ENCODE measurements at regions of chr20 and their contacts with region 1.

Region 1: GRCh38 chr20:33097001-33097400 is 17.6 kb downstream of the BPIFB4 start:
- DNase-seq: no peak
- H3K4me3 ChIP-seq: no peak overlapping the region
- H3K27ac ChIP-seq: no peak overlapping the region
- H3K4me1 ChIP-seq: no peaks in the 10 kb centered on the region
- H3K27me3 ChIP-seq: peaks cover 9% of the 10 kb centered on the region
- CTCF ChIP-seq: no peak

Region 2: DNA sequence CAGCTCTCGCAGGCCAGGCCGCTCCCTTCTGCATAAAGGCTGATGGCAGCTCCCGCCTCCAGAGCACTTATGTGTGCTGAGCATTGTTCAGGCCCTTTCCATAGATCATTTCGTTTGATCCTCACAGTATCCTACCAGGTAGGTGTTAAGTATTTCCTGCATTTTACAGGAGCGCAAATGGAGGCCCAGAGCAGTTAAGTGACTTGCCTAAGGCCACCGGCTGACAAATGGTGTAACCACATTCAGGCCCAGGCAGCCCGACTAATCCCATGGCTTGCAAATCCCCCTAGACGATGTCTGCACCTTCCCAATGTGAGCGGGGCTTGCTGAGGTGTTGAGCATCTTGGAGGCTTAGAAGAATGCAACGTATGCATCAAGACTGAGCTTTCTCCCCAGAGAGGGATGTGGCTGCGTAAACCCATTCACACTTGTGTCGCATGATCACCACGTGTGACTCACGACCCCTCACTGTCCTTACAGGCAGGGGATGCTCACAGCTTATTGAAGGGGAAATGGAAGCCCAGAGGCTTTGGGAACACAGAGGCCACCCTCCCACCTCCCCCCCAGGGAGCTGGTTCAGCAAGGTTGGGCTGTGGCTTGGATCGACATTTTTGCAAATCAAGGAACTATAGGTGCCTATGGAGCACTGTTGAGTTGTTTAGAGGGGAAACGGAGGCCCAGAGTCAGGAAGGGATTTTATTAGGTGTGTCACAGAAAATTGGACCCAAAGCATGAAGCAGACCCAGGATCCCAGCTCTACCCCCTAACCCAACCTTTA is 82.5 kb before region 1 on chr20:
- CTCF ChIA-PET with region 1: no interaction called
- POLR2A ChIA-PET with region 1: no interaction called
- intact Hi-C with region 1: no loop called
- DNase-seq: no peak
- H3K4me3 ChIP-seq: no peak overlapping the region
- H3K27ac ChIP-seq: no peak overlapping the region
- H3K4me1 ChIP-seq: no peaks in the 10 kb centered on the region
- H3K27me3 ChIP-seq: peaks cover 61% of the 10 kb centered on the region
- CTCF ChIP-seq: no peak

Region 3: DNA sequence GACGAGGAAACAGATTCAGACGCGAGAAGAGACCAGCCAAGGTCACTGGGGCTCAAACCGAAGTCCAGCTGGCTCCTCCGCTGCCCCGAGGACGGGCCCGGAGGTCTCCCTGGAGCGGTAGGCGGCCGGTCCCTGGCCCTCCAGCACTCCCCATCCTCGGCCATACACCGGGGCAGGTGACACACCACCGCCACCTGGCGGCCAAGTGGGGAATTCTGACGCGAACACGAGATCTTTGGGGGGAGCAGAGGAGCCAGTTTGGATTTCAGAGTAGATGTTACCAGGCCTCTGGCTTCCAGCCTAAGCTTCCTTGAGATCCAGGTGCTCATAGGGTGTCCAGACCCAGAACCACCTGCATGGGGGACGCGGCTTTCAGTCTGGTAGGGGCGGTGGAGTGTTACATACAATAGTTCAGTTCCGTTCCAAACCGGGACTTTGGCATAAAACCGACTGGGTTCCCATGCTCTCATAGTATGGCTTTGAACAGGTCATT is 202.2 kb after region 1 on chr20:
- CTCF ChIA-PET with region 1: no interaction called
- POLR2A ChIA-PET with region 1: no interaction called
- intact Hi-C with region 1: loop called (anchors 10 kb)
- DNase-seq: peak; percentile 74
- H3K4me3 ChIP-seq: no peak overlapping the region
- H3K27ac ChIP-seq: no peak overlapping the region
- H3K4me1 ChIP-seq: no peaks in the 10 kb centered on the region
- H3K27me3 ChIP-seq: peaks cover 40% of the 10 kb centered on the region
- CTCF ChIP-seq: peak; percentile 95

Measured in A673 (cell line).